ENCODE measurements at regions of chr2 and their contacts with region 1.

Region 1: DNA sequence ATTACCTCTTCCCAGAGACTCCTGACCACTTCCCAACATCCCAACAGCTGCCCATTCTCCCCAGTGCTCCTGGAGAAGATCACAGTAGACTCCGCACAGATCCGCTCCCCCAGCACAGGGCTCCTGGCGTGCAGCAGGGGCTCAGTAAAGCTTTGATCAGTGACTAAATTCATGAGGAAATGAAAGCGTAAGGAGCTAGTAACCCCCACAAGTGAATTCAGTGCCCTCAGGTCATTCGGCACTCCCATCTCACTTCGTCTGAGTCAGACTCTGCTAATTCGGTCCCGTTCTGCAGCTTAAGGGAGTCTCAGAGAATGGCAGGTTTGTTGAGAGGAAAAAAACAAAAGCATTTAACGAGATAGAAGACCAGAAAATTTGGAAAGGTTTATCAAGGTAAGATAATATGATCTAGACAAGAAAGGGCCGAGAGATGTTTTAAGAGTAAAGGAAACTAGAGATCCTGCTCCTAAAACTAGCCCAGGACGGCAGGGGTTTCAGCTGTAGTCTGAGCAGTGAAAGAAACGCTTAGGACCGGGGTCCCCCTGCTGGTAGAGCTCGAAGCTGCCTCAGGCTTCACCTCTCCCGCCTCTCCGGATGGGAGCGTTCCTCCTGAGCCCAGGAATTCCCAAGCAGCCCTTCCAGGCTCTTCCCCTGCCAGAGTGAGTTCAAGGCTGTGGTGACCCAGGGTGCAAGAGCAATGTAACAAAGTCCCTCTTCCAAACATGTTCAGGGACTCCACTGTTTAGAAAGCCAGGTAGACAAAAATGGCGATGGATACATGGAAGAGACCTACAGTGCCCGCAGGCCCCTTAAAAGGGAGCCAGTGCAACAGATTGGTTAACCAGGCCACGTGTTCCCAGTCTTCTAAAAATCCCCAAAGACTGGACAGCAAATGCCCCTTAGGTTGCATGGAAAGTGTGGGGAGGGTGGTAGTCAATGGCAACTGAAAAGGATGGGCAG is 127.3 kb downstream of the DNER start:
- DNase-seq: peak; percentile 75 to 78
- H3K4me3 ChIP-seq: peak overlapping the region; percentile 54
- H3K27ac ChIP-seq: peak overlapping the region; percentile 71
- H3K4me1 ChIP-seq: peaks cover 15% of the 10 kb centered on the region
- H3K27me3 ChIP-seq: no peaks in the 10 kb centered on the region
- CTCF ChIP-seq: peak; percentile 89

Region 2: DNA sequence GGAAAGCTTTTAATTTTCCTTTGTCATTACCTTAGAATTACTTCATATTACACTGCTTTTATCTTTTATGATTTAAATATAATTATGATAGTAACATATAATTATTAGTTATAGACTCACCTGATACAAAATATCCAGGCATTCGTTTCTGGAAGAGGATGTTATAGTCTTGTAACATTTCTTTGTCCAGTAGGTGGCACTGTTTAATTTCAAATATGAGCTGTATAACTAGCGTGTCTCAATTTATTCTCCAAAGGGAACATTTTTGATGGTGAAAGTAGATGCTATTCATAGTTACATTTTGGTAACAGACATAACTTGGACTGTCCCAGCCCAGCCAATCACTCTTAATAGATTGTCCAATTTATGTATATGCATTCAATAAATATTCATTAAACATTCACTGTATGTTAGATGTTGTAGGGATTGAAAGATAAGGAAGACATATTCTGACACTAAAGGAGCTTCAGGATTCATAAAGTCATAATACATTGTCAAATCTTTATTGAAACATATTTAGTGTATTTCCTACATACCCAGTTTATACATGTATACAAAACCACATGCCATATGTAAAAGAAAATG is 1696.4 kb before region 1 on chr2:
- CTCF ChIA-PET with region 1: interaction called, 15 read pairs
- POLR2A ChIA-PET with region 1: no interaction called
- intact Hi-C with region 1: loop called (anchors 10 kb)
- DNase-seq: no peak
- H3K4me3 ChIP-seq: no peak overlapping the region
- H3K27ac ChIP-seq: no peak overlapping the region
- H3K4me1 ChIP-seq: no peaks in the 10 kb centered on the region
- H3K27me3 ChIP-seq: no peaks in the 10 kb centered on the region
- CTCF ChIP-seq: peak; percentile 79

Region 3: DNA sequence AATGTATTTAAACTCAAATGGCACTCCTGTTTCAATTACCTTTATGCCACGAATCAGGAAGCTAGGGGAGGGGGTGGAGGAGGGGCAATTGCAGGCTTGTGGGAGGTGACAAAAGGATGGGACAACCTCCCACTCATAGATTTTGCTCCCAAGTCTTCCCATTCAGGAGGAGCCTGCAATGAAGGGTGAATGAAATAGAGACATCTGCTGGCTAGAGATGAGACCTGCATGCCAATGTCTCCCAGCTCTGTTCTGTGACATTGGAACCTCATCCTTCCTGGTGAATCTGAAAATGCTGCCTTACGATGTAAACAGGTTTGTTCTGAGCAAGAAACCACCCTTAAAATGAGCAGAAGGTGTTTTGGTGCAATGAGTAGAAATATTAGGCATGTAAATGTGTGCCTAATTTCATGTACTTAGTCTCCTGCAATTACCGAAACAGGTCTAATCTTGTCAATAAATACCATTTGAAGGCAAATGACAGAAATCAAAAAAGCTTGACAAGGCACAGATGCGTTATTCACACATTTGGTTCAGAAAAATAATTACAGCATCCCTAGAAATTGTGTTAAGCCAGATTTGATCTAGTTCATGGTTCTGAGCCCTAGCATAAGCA is 313.2 kb before region 1 on chr2:
- CTCF ChIA-PET with region 1: no interaction called
- POLR2A ChIA-PET with region 1: no interaction called
- intact Hi-C with region 1: loop called (anchors 5 kb)
- DNase-seq: peak; percentile 40 to 61
- H3K4me3 ChIP-seq: peak overlapping the region; percentile 40; the same call in 1 of the 2 replicates
- H3K27ac ChIP-seq: no peak overlapping the region
- H3K4me1 ChIP-seq: peaks cover 5% of the 10 kb centered on the region; the same call in 1 of the 2 replicates
- H3K27me3 ChIP-seq: peaks cover 18% of the 10 kb centered on the region
- CTCF ChIP-seq: peak; percentile 74

Region 4: DNA sequence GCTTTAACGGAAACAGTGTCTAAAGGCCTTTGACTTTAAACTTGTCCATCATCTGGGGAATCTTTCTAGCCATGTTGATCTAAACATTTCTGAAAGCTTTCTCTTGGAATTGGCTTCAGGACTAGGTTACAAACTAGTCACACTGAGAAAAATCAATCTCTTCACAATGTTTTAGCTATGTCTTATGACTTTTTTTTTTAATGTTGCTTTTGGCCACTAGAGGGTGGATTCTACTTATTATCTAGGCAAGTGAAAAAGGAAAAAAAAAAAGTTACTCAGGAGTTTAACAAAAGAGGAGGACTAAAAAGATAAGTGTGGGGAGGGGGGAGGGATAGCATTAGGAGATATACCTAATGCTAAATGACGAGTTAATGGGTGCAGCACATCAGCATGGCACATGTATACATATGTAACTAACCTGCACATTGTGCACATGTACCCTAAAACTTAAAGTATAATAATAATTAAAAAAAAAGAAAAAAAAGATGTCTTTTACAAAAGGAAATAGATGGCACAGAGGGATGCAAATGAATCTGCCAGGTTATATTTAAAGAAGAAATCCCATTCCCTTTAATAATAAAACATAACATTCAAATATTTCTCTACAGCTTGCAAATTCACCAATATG is 155.6 kb before region 1 on chr2:
- CTCF ChIA-PET with region 1: interaction called, 30 read pairs
- POLR2A ChIA-PET with region 1: no interaction called
- intact Hi-C with region 1: loop called (anchors 1 kb)
- DNase-seq: peak in 1 of 2 experiments; percentile 62
- H3K4me3 ChIP-seq: no peak overlapping the region
- H3K27ac ChIP-seq: no peak overlapping the region
- H3K4me1 ChIP-seq: 0 out of 2 replicates have a peak, but pooled peaks cover 10% of the 10 kb centered on the region
- H3K27me3 ChIP-seq: no peaks in the 10 kb centered on the region
- CTCF ChIP-seq: peak; percentile 75

Region 5: GRCh38 chr2:229714736-229715541 is 127.9 kb after region 1 on chr2:
- CTCF ChIA-PET with region 1: no interaction called
- POLR2A ChIA-PET with region 1: no interaction called
- intact Hi-C with region 1: loop called (anchors 10 kb)
- DNase-seq: peak in 1 of 2 experiments; percentile 43
- H3K4me3 ChIP-seq: peak overlapping the region; percentile 58
- H3K27ac ChIP-seq: no peak overlapping the region
- H3K4me1 ChIP-seq: 0 out of 2 replicates have a peak, but pooled peaks cover 7% of the 10 kb centered on the region
- H3K27me3 ChIP-seq: peaks cover 13% of the 10 kb centered on the region
- CTCF ChIP-seq: no peak

Measured in PC-9 (cell line).